MCF 10A (cell line): ENCODE measurements at regions of chr5 and their contacts with region 1.

Region 1: GRCh38 chr5:165015547-165015946 is 1510.1 kb downstream of the MAT2B start:
- DNase-seq: no peak
- H3K4me3 Mint-ChIP-seq: no peak overlapping the region
- H3K27ac Mint-ChIP-seq: no peak overlapping the region
- H3K4me1 Mint-ChIP-seq: peaks cover 11% of the 10 kb centered on the region
- H3K27me3 Mint-ChIP-seq: no peaks in the 10 kb centered on the region
- CTCF ChIP-seq: no peak

Region 2: GRCh38 chr5:164909673-164910072 is 105.9 kb before region 1 on chr5:
- CTCF ChIA-PET with region 1: no interaction called
- POLR2A ChIA-PET with region 1: no interaction called
- intact Hi-C with region 1: loop called (anchors 1 kb)
- DNase-seq: no peak
- H3K4me3 Mint-ChIP-seq: no peak overlapping the region
- H3K27ac Mint-ChIP-seq: no peak overlapping the region
- H3K4me1 Mint-ChIP-seq: no peaks in the 10 kb centered on the region
- H3K27me3 Mint-ChIP-seq: no peaks in the 10 kb centered on the region
- CTCF ChIP-seq: no peak